ENCODE measurements at regions of chr20 and their contacts with region 1.

Region 1: DNA sequence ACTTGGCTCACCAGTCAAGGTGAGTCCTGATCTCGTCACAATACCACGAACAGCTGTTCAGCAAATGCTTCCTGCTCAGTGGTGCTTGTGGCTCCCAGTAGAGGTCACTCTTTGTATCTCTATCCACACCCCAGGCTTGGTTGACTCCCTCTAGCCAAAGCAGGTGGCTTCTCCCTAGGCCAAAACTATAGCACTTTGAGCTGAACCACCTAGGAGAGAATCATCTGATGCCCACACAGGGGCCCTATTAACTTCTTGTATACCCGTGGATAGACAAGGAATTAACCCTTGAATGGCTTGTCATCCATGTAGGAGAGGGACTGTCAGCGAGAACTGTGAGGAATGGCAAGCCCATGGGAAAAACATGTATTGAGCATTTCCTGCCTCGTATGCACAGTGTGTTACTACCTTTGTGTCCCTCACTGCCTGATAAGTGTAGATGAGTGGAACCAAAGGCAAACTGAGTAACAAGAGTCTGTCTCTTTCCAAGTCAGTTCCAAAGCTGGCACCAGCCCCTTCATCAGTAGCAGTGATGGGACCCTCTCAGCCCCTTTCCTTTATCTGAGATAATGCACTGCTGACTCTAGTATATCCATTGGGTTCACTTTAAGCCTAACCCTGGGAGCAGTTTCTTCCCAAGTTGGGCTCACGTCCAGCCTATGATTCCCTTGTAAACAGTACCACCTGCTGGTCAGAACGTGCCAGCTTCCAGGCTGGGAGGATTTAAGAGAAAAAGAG is 42.5 kb downstream of the EIF2S2 start:
- DNase-seq: peak; percentile 86
- ATAC-seq: peak; percentile 86
- H3K4me3 ChIP-seq: no peak overlapping the region
- H3K27ac ChIP-seq: no peak overlapping the region
- H3K4me1 ChIP-seq: no peaks in the 10 kb centered on the region
- H3K27me3 ChIP-seq: no peaks in the 10 kb centered on the region
- CTCF ChIP-seq: peak; percentile 95
- EP300 ChIP-seq: no peak
- POLR2A ChIP-seq: no peak
- RAD21 ChIP-seq: peak; percentile 97

Region 2: GRCh38 chr20:33791959-33792597 is 277.4 kb before region 1 on chr20:
- CTCF ChIA-PET with region 1: interaction called, 8 read pairs
- POLR2A ChIA-PET with region 1: no interaction called
- in situ Hi-C with region 1: no loop called
- intact Hi-C with region 1: loop called (anchors 10 kb)
- DNase-seq: peak; percentile 61
- ATAC-seq: peak; percentile 63
- H3K4me3 ChIP-seq: no peak overlapping the region
- H3K27ac ChIP-seq: no peak overlapping the region
- H3K4me1 ChIP-seq: peaks cover 43% of the 10 kb centered on the region
- H3K27me3 ChIP-seq: 0 out of 5 replicates have a peak, but pooled peaks cover 0 to 5% of the 10 kb centered on the region in 2 experiments
- CTCF ChIP-seq: peak; percentile 99
- EP300 ChIP-seq: no peak
- POLR2A ChIP-seq: no peak
- RAD21 ChIP-seq: peak; percentile 96

Region 3: GRCh38 chr20:33897313-33897912 is 172.1 kb before region 1 on chr20:
- CTCF ChIA-PET with region 1: interaction called, 7 read pairs
- POLR2A ChIA-PET with region 1: no interaction called
- in situ Hi-C with region 1: no loop called
- intact Hi-C with region 1: loop called (anchors 1 kb)
- DNase-seq: no peak
- ATAC-seq: peak; percentile 67
- H3K4me3 ChIP-seq: no peak overlapping the region
- H3K27ac ChIP-seq: no peak overlapping the region
- H3K4me1 ChIP-seq: peaks cover 37% of the 10 kb centered on the region
- H3K27me3 ChIP-seq: 0 out of 5 replicates have a peak, but pooled peaks cover 0 to 11% of the 10 kb centered on the region in 2 experiments
- CTCF ChIP-seq: peak; percentile 68
- EP300 ChIP-seq: no peak
- POLR2A ChIP-seq: no peak
- RAD21 ChIP-seq: peak; percentile 49; the same call in 1 of the 2 replicates

Region 4: GRCh38 chr20:33933469-33933909 is 136.0 kb before region 1 on chr20:
- CTCF ChIA-PET with region 1: interaction called, 100 read pairs
- POLR2A ChIA-PET with region 1: interaction called, 3 read pairs
- in situ Hi-C with region 1: loop called (anchors 5 kb)
- intact Hi-C with region 1: loop called (anchors 1 kb)
- DNase-seq: peak; percentile 87
- ATAC-seq: peak; percentile 96
- H3K4me3 ChIP-seq: peak overlapping the region in 1 of 3 experiments; percentile 50; a peak in 1 of 6 replicates
- H3K27ac ChIP-seq: no peak overlapping the region
- H3K4me1 ChIP-seq: peaks cover 19% of the 10 kb centered on the region
- H3K27me3 ChIP-seq: peaks cover 2 to 13% of the 10 kb centered on the region in 2 experiments; a peak in 3 of 5 replicates
- CTCF ChIP-seq: peak; percentile 100
- EP300 ChIP-seq: no peak
- POLR2A ChIP-seq: no peak
- RAD21 ChIP-seq: peak; percentile 99

Region 5: DNA sequence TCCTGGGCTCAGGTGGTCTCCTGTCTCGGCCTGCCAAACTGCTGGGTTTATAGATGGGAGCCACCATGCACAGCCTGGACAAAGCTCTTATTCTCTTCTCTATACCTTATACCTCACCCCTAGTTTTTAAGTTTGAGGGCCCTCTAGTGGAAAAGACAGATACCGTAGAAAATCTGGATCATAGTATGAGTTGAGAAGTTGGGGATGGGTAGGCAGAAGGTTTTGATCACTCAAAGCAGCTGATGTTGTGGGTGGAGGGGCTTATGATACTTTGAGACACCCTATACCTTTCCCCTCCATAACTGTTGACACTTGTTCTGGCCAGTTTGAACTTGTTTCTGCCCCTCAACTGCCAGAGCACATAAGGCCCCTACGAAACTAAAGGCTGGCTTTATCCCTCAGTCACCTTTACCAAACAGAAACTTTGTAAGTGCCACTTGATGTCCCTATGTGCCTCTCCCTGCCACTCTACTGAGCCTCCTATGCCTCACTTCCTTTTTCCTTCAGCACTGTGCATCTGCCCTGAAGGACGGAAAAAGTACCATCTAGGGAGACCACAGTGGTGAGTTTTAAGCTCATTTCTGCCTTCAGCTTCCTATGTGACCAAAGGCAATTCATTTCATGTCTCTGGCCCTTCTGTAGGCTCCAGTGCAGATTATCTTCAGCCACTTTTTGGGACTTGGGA is 47.2 kb before region 1 on chr20:
- CTCF ChIA-PET with region 1: interaction called, 3 read pairs
- POLR2A ChIA-PET with region 1: no interaction called
- in situ Hi-C with region 1: no loop called
- intact Hi-C with region 1: loop called (anchors 1 kb)
- DNase-seq: peak; percentile 72
- ATAC-seq: peak; percentile 75
- H3K4me3 ChIP-seq: no peak overlapping the region
- H3K27ac ChIP-seq: no peak overlapping the region
- H3K4me1 ChIP-seq: peaks cover 56% of the 10 kb centered on the region
- H3K27me3 ChIP-seq: no peaks in the 10 kb centered on the region
- CTCF ChIP-seq: peak; percentile 79
- EP300 ChIP-seq: no peak
- POLR2A ChIP-seq: no peak
- RAD21 ChIP-seq: peak; percentile 84